MCF 10A (cell line): ENCODE measurements at regions of chr1 and their contacts with region 1.

Region 1: DNA sequence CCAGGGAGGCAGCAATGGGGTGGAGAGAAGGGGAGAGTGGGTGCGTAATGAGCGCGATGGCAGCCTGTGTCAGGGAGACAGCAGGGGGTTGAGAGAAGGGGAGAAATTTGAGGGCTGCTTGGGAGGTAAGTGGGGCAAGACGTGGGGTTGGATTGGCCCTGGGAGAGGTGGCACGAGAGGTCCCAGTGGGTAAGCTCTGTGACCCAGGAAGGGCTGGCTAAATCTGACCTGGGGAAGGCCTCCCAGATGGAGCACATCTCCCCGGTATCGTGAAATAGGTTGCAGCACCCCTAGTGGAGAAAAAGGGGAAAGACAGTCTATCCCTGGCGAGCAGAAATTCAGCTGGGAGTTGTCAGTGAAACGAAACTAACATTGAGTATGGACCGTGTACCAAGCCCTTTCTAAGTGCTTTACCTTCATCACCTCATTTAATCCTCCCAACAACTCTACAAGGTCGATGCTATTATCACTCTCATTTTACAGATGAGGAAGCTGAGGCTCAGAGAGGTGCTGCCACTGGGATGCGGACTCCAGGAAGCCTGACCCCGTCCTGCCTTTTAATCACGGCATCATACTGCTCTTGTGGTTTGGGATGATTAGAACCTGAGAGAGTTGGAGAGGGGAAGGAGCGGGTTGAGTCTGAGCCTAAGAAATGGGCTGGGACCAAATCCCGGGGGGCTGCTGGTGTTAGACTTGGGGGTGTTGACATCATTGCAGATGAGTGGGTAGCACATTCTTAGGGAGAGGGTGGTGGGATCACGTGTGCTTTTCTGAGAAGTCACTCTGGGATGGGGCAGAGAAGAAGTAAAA is 56.6 kb upstream of the RPL11 start:
- DNase-seq: peak; percentile 75
- H3K4me3 Mint-ChIP-seq: peak overlapping the region; percentile 72
- H3K27ac Mint-ChIP-seq: peak overlapping the region; percentile 86
- H3K4me1 Mint-ChIP-seq: peaks cover 14% of the 10 kb centered on the region
- H3K27me3 Mint-ChIP-seq: no peaks in the 10 kb centered on the region
- CTCF ChIP-seq: peak; percentile 71

Region 2: DNA sequence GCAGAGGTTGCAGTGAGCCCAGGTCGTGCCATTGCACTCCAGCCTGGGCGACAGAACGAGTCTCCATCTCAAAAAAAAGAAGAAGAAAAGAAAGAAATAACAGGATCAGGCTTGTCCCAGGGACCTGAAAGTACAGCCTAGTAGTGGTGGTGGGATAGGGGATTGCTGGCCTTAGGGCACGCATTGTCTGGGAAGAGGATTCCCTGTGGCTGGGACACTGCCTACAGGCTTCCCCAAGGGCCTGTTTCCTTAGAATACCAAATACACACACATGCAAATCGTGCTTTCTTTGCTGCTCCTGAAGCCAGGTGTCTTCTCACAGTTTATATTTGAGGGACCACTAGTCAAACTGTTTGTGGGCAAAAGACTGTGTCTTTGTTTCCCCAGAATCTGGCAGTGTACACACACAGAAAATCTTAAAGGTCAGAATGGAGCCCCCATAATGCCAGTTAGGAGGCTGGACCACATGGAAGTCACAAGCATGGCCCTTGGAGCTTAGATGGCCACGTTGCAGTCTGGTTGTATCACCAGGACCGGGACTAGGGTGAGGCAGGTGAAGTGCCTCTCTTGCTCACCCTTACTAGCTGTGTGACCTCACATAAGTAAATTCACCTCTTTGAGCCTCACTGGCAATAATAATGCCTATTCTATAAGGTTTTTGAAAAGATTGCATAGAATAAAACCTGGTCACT is 138.4 kb before region 1 on chr1:
- CTCF ChIA-PET with region 1: interaction called, 23 read pairs
- POLR2A ChIA-PET with region 1: no interaction called
- intact Hi-C with region 1: loop called (anchors 2 kb)
- DNase-seq: no peak
- H3K4me3 Mint-ChIP-seq: no peak overlapping the region
- H3K27ac Mint-ChIP-seq: no peak overlapping the region
- H3K4me1 Mint-ChIP-seq: no peaks in the 10 kb centered on the region
- H3K27me3 Mint-ChIP-seq: peaks cover 5% of the 10 kb centered on the region
- CTCF ChIP-seq: no peak

Region 3: GRCh38 chr1:23548704-23549143 is 86.3 kb before region 1 on chr1:
- CTCF ChIA-PET with region 1: interaction called, 472 read pairs
- POLR2A ChIA-PET with region 1: interaction called, 131 read pairs
- intact Hi-C with region 1: loop called (anchors 1 kb)
- DNase-seq: no peak
- H3K4me3 Mint-ChIP-seq: no peak overlapping the region
- H3K27ac Mint-ChIP-seq: no peak overlapping the region
- H3K4me1 Mint-ChIP-seq: peaks cover 6% of the 10 kb centered on the region
- H3K27me3 Mint-ChIP-seq: no peaks in the 10 kb centered on the region
- CTCF ChIP-seq: no peak

Region 4: GRCh38 chr1:23585447-23586015 is 49.5 kb before region 1 on chr1:
- CTCF ChIA-PET with region 1: interaction called, 10 read pairs
- POLR2A ChIA-PET with region 1: interaction called, 4 read pairs
- intact Hi-C with region 1: loop called (anchors 5 kb)
- DNase-seq: peak; percentile 96
- H3K4me3 Mint-ChIP-seq: peak overlapping the region; percentile 23
- H3K27ac Mint-ChIP-seq: peak overlapping the region; percentile 85
- H3K4me1 Mint-ChIP-seq: peaks cover 43% of the 10 kb centered on the region
- H3K27me3 Mint-ChIP-seq: no peaks in the 10 kb centered on the region
- CTCF ChIP-seq: no peak

Region 5: DNA sequence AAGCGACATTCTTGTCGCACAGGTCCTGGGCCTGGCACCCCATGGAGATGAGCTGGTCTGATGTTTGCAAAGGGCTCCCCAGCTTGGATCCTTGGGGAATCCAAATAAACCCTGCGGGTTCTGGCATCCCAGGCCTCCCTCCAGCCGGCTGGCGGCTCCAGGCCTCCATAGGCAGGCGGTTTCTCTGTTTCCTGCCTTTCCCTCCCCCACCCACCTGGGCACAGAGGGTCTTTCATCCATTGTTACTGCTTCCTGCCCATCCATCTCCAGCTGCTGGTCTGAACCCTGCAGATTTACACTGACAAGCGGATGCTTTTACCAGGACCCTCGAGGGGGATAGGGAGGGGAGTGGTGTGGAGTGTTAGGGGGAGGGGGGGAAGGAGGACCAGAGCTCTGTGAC is 36.6 kb before region 1 on chr1:
- CTCF ChIA-PET with region 1: interaction called, 22 read pairs
- POLR2A ChIA-PET with region 1: interaction called, 13 read pairs
- intact Hi-C with region 1: loop called (anchors 5 kb)
- DNase-seq: no peak
- H3K4me3 Mint-ChIP-seq: no peak overlapping the region
- H3K27ac Mint-ChIP-seq: no peak overlapping the region
- H3K4me1 Mint-ChIP-seq: peaks cover 25% of the 10 kb centered on the region
- H3K27me3 Mint-ChIP-seq: no peaks in the 10 kb centered on the region
- CTCF ChIP-seq: no peak

Region 6: DNA sequence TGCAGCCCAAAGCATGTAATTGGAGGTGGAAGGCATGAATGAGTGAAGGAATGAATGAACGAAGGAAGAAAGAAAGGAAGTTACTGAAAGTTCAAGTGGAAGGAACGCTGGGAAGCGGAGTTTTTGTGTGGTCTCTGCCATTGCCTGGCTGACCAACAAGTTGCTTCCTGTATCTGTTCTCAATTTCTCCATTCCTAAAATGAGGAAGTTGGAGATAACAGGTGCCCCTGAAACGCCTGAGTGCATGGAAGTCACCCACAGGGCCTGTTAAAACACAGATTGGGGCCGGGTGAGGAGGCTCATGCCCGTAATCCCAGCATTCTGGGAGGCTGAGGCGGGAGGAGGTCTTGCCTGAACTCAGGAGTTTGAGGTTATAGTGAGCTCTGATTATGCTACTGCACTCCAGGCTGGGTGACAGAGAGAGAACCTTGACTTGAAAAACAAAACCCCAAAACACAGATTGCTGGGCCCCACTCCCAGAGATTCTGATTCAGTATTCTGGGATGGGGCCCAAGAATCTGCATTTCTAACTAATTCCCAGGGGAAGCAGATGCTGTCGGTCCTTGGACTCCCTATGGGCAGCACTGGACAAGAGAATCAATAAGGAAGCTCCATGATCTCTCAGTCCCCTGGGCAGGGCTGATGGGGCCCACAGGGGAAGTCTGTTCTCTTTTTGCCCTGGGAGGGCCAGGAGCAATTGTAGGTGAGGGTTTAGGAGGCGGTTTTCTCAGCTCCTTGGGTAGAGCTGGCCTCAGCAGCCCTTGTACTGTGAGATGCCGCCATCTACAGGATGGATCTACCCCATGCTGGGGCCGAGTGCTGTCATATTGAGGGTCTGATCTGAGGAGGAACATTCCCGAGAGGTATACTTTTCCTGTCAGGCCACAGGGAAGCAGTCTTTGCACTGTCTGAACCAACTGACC is 281.4 kb after region 1 on chr1:
- CTCF ChIA-PET with region 1: interaction called, 3 read pairs
- POLR2A ChIA-PET with region 1: no interaction called
- intact Hi-C with region 1: loop called (anchors 5 kb)
- DNase-seq: peak; percentile 85
- H3K4me3 Mint-ChIP-seq: no peak overlapping the region
- H3K27ac Mint-ChIP-seq: no peak overlapping the region
- H3K4me1 Mint-ChIP-seq: peaks cover 6% of the 10 kb centered on the region
- H3K27me3 Mint-ChIP-seq: no peaks in the 10 kb centered on the region
- CTCF ChIP-seq: peak; percentile 78